Left cardiac atrium (tissue), 4 donors: ENCODE measurements at regions of chr17 and their contacts with region 1.

Region 1: GRCh38 chr17:73969956-73970355 is 233.5 kb upstream of the RPL38 start:
- DNase-seq: peak; percentile 43
- ATAC-seq: no peak

Region 2: DNA sequence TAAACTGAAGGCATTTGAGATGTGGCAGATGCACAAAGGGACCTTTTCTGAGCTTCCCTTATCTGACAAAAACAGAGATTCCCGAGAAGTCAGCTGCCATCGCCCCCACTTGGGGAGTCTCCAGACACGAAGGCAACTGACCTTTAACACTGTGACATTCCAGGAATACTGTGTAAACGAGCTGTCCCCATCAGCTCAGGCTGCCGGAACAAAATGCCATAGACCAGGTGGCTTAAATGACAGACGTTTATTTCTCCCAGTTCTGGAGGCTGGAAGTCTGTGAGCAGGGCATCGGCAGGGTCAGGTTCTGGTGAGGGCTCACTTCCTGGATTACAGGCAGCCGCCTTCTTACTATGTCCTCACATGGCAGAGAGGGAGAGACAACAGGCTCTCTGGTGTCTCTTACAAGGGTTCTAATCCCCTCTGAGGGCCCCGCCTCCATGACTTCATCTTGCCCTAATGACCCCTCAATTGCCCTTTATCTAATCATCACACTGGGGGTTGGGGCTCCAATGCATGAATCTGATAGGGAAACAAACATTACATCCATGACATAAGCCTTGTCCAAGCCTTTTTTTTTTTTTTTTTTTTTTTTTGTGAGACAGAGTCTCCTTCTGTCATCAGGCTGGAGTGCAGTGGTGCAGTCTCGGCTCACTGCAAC is 55.0 kb after region 1 on chr17:
- intact Hi-C with region 1: no loop called
- DNase-seq: no peak
- ATAC-seq: no peak

Region 3: GRCh38 chr17:74176546-74177001 is 206.6 kb after region 1 on chr17:
- intact Hi-C with region 1: loop called in 1 of 2 experiments (anchors 10 kb)
- DNase-seq: peak; percentile 55
- ATAC-seq: peak; percentile 78 to 90

Region 4: GRCh38 chr17:74190172-74190571 is 220.2 kb after region 1 on chr17:
- intact Hi-C with region 1: no loop called
- DNase-seq: no peak
- ATAC-seq: peak; percentile 86 to 87